ENCODE measurements at regions of chr19 and their contacts with region 1.

Region 1: GRCh38 chr19:1848399-1849131 is at the start of gene REXO1:
- DNase-seq: peak; percentile 96 to 100 (median 98)
- ATAC-seq: peak; percentile 90
- H3K4me3 ChIP-seq: peak within 1 kb of the TSS; percentile 85
- H3K4me3 Mint-ChIP-seq: peak within 1 kb of the TSS; percentile 83 to 95 (median 91)
- H3K27ac ChIP-seq: peak within 1 kb of the TSS; percentile 99
- H3K27ac Mint-ChIP-seq: peak within 1 kb of the TSS; percentile 85 to 95 (median 93)
- H3K4me1 ChIP-seq: peaks cover 30 to 67% of the 10 kb centered on the region in 2 donors
- H3K4me1 Mint-ChIP-seq: peaks cover 36 to 72% (median 52%) of the 10 kb centered on the region in 7 donors
- H3K27me3 ChIP-seq: no peaks in the 10 kb centered on the region
- H3K27me3 Mint-ChIP-seq: no peaks in the 10 kb centered on the region
- total RNA-seq, gene REXO1: 52.7 to 92.6 (median 73.1) TPM

Region 2: GRCh38 chr19:1249298-1249989 is 599.1 kb before region 1 on chr19:
- CTCF ChIA-PET with region 1: no interaction called
- POLR2A ChIA-PET with region 1: no interaction called
- intact Hi-C with region 1: no loop called
- DNase-seq: peak; percentile 88 to 97 (median 94)
- ATAC-seq: peak; percentile 74
- H3K4me3 ChIP-seq: peak overlapping the region; percentile 63
- H3K4me3 Mint-ChIP-seq: peak overlapping the region; percentile 80 to 95 (median 88)
- H3K27ac ChIP-seq: peak overlapping the region; percentile 94
- H3K27ac Mint-ChIP-seq: peak overlapping the region; percentile 62 to 95 (median 89)
- H3K4me1 ChIP-seq: peaks cover 22 to 27% of the 10 kb centered on the region in 2 donors
- H3K4me1 Mint-ChIP-seq: peaks cover 0 to 11% (median 10%) of the 10 kb centered on the region in 7 donors
- H3K27me3 ChIP-seq: no peaks in the 10 kb centered on the region
- H3K27me3 Mint-ChIP-seq: no peaks in the 10 kb centered on the region

Region 3: GRCh38 chr19:1652471-1653299 is 195.9 kb before region 1 on chr19 and contains the start of gene TCF3:
- CTCF ChIA-PET with region 1: no interaction called
- POLR2A ChIA-PET with region 1: no interaction called
- intact Hi-C with region 1: loop called in 1 of 2 experiments (anchors 1 kb)
- DNase-seq: peak; percentile 96 to 100 (median 99)
- ATAC-seq: peak; percentile 96
- H3K4me3 ChIP-seq: peak within 1 kb of the TSS; percentile 86
- H3K4me3 Mint-ChIP-seq: peak within 1 kb of the TSS; percentile 86 to 96 (median 91)
- H3K27ac ChIP-seq: peak within 1 kb of the TSS; percentile 99
- H3K27ac Mint-ChIP-seq: peak within 1 kb of the TSS; percentile 87 to 98 (median 95)
- H3K4me1 ChIP-seq: peaks cover 4 to 8% of the 10 kb centered on the region in 2 donors
- H3K4me1 Mint-ChIP-seq: peaks cover 7 to 14% (median 10%) of the 10 kb centered on the region in 7 donors
- H3K27me3 ChIP-seq: no peaks in the 10 kb centered on the region
- H3K27me3 Mint-ChIP-seq: peaks cover 0 to 4% (median 0%) of the 10 kb centered on the region in 5 donors
- total RNA-seq, gene TCF3: 66.6 to 83.6 (median 78.3) TPM

Region 4: DNA sequence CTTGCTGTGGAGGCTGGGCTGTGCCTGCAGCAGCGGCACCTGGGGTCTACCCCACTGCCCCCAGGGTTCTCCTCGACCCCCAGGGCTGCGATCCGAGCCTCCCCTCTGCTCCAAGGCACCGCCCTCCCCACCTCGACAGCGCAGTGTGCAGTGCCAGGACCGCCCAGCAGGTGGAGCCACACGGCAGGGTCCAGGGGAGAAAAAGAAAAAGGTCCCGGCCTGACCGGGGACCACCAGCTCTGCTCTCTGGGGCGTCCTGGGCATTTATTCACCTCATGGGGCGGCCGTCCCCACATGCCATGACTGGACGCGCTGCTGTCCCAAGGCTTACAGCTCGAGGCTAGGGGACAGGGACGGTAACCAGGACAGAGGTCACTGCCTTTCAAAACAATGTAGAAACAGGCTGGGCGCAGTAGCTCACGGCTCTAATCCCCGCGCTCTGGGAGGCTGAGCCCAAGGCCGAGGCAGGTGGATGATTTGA is 10.9 kb before region 1 on chr19:
- CTCF ChIA-PET with region 1: no interaction called
- POLR2A ChIA-PET with region 1: interaction called, 4 read pairs
- intact Hi-C with region 1: loop called (anchors 1 kb)
- DNase-seq: peak in 5 of 9 donors; percentile 31 to 75 (median 51)
- ATAC-seq: peak; percentile 84
- H3K4me3 ChIP-seq: no peak overlapping the region
- H3K4me3 Mint-ChIP-seq: peak overlapping the region in 1 of 10 donors; percentile 23
- H3K27ac ChIP-seq: no peak overlapping the region
- H3K27ac Mint-ChIP-seq: no peak overlapping the region
- H3K4me1 ChIP-seq: peaks cover 0 to under 1% of the 10 kb centered on the region in 2 donors
- H3K4me1 Mint-ChIP-seq: peaks cover 18 to 50% (median 35%) of the 10 kb centered on the region in 7 donors
- H3K27me3 ChIP-seq: no peaks in the 10 kb centered on the region
- H3K27me3 Mint-ChIP-seq: no peaks in the 10 kb centered on the region

Measured in naive thymus-derived CD4-positive, alpha-beta T cell (primary cell).